ENCODE measurements at regions of chr3 and their contacts with region 1.

Region 1: GRCh38 chr3:179272385-179272784 is 21.5 kb upstream of the KCNMB3 start:
- DNase-seq: peak; percentile 49
- H3K4me3 ChIP-seq: no peak overlapping the region
- H3K27ac ChIP-seq: no peak overlapping the region
- H3K4me1 ChIP-seq: peaks cover 11% of the 10 kb centered on the region
- H3K27me3 ChIP-seq: no peaks in the 10 kb centered on the region
- CTCF ChIP-seq: peak; percentile 33 to 34
- POLR2A ChIP-seq: no peak

Region 2: GRCh38 chr3:179015551-179016020 is 256.8 kb before region 1 on chr3:
- CTCF ChIA-PET with region 1: interaction called, 7 read pairs
- POLR2A ChIA-PET with region 1: no interaction called
- dilution Hi-C with region 1: no loop called
- intact Hi-C with region 1: loop called (anchors 2 kb)
- DNase-seq: peak; percentile 86
- H3K4me3 ChIP-seq: no peak overlapping the region
- H3K27ac ChIP-seq: no peak overlapping the region
- H3K4me1 ChIP-seq: peaks cover 6% of the 10 kb centered on the region
- H3K27me3 ChIP-seq: no peaks in the 10 kb centered on the region
- CTCF ChIP-seq: peak; percentile 59 to 62
- POLR2A ChIP-seq: no peak

Region 3: DNA sequence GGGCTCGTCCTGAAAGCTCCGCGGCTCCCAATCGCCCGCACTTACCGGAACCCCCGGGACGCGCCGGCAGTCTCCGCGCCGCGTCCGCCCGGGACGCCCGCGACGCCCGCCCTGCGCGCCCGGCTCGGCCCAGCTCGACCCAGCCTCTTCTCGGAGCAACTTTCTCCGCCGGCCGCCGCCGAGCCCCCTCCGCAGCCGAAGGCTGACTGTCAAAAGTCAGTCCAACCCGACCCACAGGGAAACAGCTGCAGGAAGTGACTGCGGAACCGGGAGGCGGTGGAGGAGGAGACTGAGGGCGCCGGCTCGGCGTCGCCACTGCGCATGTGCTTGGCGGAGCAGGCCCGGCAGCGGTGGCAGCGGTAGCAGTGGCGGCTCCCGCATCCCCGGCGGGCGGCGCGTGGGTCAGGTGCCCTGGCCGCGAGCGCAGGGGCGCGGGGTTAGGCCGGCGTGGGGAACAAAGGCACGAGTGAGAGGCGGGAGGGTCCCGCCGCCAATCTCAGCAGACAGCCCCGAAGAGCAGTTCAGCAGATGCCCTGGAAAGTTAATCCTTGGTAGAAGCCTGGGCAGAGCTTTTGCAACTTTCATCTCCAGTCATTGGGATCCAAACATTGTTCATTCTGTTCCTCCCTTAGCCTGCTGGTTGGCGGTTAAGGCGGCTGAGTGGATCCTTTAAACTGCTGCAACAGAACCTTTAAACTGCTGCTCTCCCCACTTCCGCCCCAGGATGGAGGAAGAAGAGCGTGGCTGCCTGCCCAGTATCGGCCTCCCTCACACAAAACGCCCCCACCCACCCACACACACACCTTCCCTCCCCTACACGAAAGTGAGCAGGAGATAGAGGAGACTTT is 200.6 kb before region 1 on chr3 and contains the start of gene ZMAT3:
- CTCF ChIA-PET with region 1: interaction called, 12 read pairs
- POLR2A ChIA-PET with region 1: no interaction called
- dilution Hi-C with region 1: no loop called
- intact Hi-C with region 1: loop called (anchors 2 kb)
- DNase-seq: peak; percentile 93
- H3K4me3 ChIP-seq: peak within 1 kb of the TSS; percentile 18 to 56 (median 53)
- H3K27ac ChIP-seq: peak within 1 kb of the TSS; percentile 81
- H3K4me1 ChIP-seq: peaks cover 10% of the 10 kb centered on the region
- H3K27me3 ChIP-seq: no peaks in the 10 kb centered on the region
- CTCF ChIP-seq: no peak
- POLR2A ChIP-seq: peak; percentile 89
- total RNA-seq, gene ZMAT3: 33.1 and 35.5 TPM in 2 replicates

Region 4: GRCh38 chr3:179108086-179108485 is 164.3 kb before region 1 on chr3:
- CTCF ChIA-PET with region 1: interaction called, 18 read pairs
- POLR2A ChIA-PET with region 1: no interaction called
- dilution Hi-C with region 1: no loop called
- intact Hi-C with region 1: loop called (anchors 1 kb)
- DNase-seq: peak; percentile 15
- H3K4me3 ChIP-seq: no peak overlapping the region
- H3K27ac ChIP-seq: no peak overlapping the region
- H3K4me1 ChIP-seq: peaks cover 9% of the 10 kb centered on the region
- H3K27me3 ChIP-seq: no peaks in the 10 kb centered on the region
- CTCF ChIP-seq: no peak
- POLR2A ChIP-seq: no peak

Region 5: DNA sequence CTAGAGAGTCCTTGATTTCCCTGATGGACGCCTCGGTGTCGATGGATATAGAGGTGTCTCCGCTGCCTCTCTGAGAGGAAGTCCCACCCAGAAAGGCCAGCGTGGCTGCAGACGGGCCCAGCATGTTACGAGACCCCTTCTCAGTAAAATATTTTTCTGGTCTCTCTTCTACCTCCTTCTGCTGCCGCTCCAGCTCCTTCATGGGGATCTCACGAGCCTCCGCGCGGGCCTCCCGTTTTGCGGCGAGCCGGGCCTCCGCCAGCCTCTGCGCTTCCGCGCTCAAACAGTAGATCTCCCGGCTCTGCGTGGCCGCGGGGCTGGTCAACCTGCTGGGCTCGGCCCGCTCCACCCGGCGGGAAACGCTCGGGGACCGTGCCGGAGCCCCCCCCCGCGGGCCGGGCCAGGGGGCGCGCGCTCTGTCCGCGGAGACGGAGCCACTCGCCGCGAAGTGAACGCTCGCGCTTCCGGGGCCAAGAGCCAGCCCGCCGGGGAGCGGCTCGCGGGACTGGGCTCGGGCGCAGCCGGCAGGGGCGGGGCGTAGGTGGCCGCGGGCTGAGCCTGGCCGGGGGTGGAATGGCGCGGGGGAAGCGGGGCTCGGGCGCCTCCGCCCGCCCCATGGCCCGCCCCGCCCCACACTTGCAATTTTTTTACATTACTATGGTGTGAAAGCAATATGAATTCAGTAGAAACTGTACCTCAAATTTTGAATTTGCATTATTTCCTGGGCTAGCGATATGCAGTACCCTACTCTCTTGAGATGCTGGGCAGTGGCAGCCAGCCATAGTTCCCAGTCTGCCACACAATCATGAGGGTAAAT is 11.2 kb before region 1 on chr3:
- CTCF ChIA-PET with region 1: interaction called, 11 read pairs
- POLR2A ChIA-PET with region 1: no interaction called
- dilution Hi-C with region 1: no loop called
- intact Hi-C with region 1: no loop called
- DNase-seq: peak; percentile 58
- H3K4me3 ChIP-seq: peak overlapping the region; percentile 13 to 56 (median 44)
- H3K27ac ChIP-seq: no peak overlapping the region
- H3K4me1 ChIP-seq: no peaks in the 10 kb centered on the region
- H3K27me3 ChIP-seq: no peaks in the 10 kb centered on the region
- CTCF ChIP-seq: no peak
- POLR2A ChIP-seq: peak; percentile 30

Region 6: GRCh38 chr3:179309225-179310078 is 37.1 kb after region 1 on chr3:
- CTCF ChIA-PET with region 1: interaction called, 13 read pairs
- POLR2A ChIA-PET with region 1: no interaction called
- dilution Hi-C with region 1: no loop called
- intact Hi-C with region 1: no loop called
- DNase-seq: no peak
- H3K4me3 ChIP-seq: no peak overlapping the region
- H3K27ac ChIP-seq: no peak overlapping the region
- H3K4me1 ChIP-seq: no peaks in the 10 kb centered on the region
- H3K27me3 ChIP-seq: no peaks in the 10 kb centered on the region
- CTCF ChIP-seq: no peak
- POLR2A ChIP-seq: no peak

Measured in endothelial cell of umbilical vein (primary cell).